ENCODE measurements at regions of chr14 and their contacts with region 1.

Region 1: GRCh38 chr14:71932220-71932981 is at the start of gene RGS6:
- DNase-seq: no peak
- ATAC-seq: peak; percentile 85
- H3K4me3 ChIP-seq: peak within 1 kb of the TSS; percentile 58
- H3K27ac ChIP-seq: peak within 1 kb of the TSS; percentile 48
- H3K4me1 ChIP-seq: no peaks in the 10 kb centered on the region
- H3K27me3 ChIP-seq: peaks cover 0 to 6% of the 10 kb centered on the region in 2 experiments; a peak in 1 of 4 replicates
- CTCF ChIP-seq: peak; percentile 40 to 60 (median 47); a peak in 5 of 6 replicates
- EP300 ChIP-seq: no peak
- POLR2A ChIP-seq: peak; percentile 45; the same call in 1 of the 2 replicates
- RAD21 ChIP-seq: peak; percentile 76
- polyA plus RNA-seq, gene RGS6: 3.9 to 4.7 TPM

Region 2: DNA sequence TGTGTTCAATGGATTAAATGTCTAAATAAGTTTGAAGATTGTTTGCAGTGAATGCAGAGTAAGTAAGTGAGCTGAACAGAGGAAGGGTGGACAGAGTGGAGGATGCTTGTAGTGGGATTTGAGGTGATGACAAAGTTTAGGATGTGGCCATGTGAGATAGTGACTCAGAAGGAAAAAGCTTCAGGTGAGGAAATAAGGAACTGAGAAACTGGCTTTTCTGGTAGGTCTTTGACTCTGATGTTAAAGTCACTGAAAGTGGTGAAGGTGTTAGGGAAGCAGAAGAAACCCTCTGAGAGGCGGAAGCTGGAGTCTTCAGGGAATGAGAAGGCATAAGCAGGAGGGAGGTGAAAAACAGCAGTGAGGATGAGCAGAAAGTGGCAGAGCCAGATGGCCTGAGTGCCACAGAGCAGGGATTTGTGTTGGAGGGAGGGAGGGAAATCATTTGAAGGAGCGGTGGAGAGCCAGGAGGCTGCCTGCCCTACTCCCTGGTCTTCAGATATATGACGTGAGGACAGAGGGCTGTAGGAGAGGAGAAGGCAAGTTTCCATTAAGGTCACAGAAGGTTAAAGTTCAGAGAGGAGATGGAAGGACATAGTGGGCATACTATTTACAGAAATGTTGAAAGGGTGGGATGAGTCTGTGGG is 24.6 kb after region 1 on chr14:
- CTCF ChIA-PET with region 1: interaction called, 15 read pairs
- POLR2A ChIA-PET with region 1: interaction called, 6 read pairs
- RAD21 ChIA-PET with region 1: interaction called, 32 read pairs
- SMC1A ChIA-PET with region 1: interaction called, 33 read pairs
- in situ Hi-C with region 1: no loop called
- intact Hi-C with region 1: no loop called
- DNase-seq: peak; percentile 78
- ATAC-seq: peak; percentile 83
- H3K4me3 ChIP-seq: no peak overlapping the region
- H3K27ac ChIP-seq: peak overlapping the region; percentile 70
- H3K4me1 ChIP-seq: peaks cover 18% of the 10 kb centered on the region
- H3K27me3 ChIP-seq: no peaks in the 10 kb centered on the region
- CTCF ChIP-seq: no peak
- EP300 ChIP-seq: peak; percentile 88 to 99
- POLR2A ChIP-seq: no peak
- RAD21 ChIP-seq: no peak

Region 3: GRCh38 chr14:71995741-71996140 is 63.3 kb after region 1 on chr14:
- CTCF ChIA-PET with region 1: interaction called, 7 read pairs
- POLR2A ChIA-PET with region 1: no interaction called
- RAD21 ChIA-PET with region 1: interaction called, 10 read pairs
- SMC1A ChIA-PET with region 1: interaction called, 7 read pairs
- in situ Hi-C with region 1: no loop called
- intact Hi-C with region 1: loop called (anchors 5 kb)
- DNase-seq: no peak
- ATAC-seq: no peak
- H3K4me3 ChIP-seq: no peak overlapping the region
- H3K27ac ChIP-seq: no peak overlapping the region
- H3K4me1 ChIP-seq: no peaks in the 10 kb centered on the region
- H3K27me3 ChIP-seq: no peaks in the 10 kb centered on the region
- CTCF ChIP-seq: no peak
- EP300 ChIP-seq: no peak
- POLR2A ChIP-seq: no peak
- RAD21 ChIP-seq: no peak

Region 4: GRCh38 chr14:72023722-72024407 is 91.5 kb after region 1 on chr14:
- CTCF ChIA-PET with region 1: interaction called, 56 read pairs
- POLR2A ChIA-PET with region 1: interaction called, 4 read pairs
- RAD21 ChIA-PET with region 1: interaction called, 38 read pairs
- SMC1A ChIA-PET with region 1: interaction called, 74 read pairs
- in situ Hi-C with region 1: no loop called
- intact Hi-C with region 1: loop called (anchors 5 kb)
- DNase-seq: peak; percentile 43
- ATAC-seq: peak; percentile 90
- H3K4me3 ChIP-seq: no peak overlapping the region
- H3K27ac ChIP-seq: no peak overlapping the region
- H3K4me1 ChIP-seq: peaks cover 15% of the 10 kb centered on the region
- H3K27me3 ChIP-seq: no peaks in the 10 kb centered on the region
- CTCF ChIP-seq: peak; percentile 61 to 76 (median 64)
- EP300 ChIP-seq: no peak
- POLR2A ChIP-seq: no peak
- RAD21 ChIP-seq: peak; percentile 80

Region 5: DNA sequence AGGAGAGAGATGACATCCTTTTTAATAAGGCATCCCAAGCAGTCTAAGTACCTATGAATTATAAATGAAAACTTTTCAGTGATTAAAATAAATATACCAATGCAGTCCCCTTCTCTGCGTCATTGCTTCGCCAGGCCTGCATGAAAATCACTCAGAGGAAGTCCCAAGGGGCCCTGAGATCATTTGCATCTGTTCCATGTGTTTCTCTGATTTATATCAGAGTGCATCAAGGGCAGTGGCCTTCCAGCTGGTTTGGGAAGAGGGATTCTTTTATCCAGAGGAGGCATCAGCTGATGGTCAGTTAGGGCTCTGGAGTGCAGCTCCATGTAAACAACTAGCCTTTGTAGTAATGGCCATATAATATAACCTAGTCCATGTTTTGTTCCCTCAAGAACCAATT is 209.9 kb after region 1 on chr14:
- CTCF ChIA-PET with region 1: interaction called, 11 read pairs
- POLR2A ChIA-PET with region 1: no interaction called
- RAD21 ChIA-PET with region 1: no interaction called
- SMC1A ChIA-PET with region 1: interaction called, 4 read pairs
- in situ Hi-C with region 1: no loop called
- intact Hi-C with region 1: no loop called
- DNase-seq: no peak
- ATAC-seq: no peak; the same call in 2 of the 3 replicates
- H3K4me3 ChIP-seq: no peak overlapping the region
- H3K27ac ChIP-seq: no peak overlapping the region
- H3K4me1 ChIP-seq: no peaks in the 10 kb centered on the region
- H3K27me3 ChIP-seq: no peaks in the 10 kb centered on the region
- CTCF ChIP-seq: no peak
- EP300 ChIP-seq: no peak
- POLR2A ChIP-seq: no peak
- RAD21 ChIP-seq: no peak

Region 6: DNA sequence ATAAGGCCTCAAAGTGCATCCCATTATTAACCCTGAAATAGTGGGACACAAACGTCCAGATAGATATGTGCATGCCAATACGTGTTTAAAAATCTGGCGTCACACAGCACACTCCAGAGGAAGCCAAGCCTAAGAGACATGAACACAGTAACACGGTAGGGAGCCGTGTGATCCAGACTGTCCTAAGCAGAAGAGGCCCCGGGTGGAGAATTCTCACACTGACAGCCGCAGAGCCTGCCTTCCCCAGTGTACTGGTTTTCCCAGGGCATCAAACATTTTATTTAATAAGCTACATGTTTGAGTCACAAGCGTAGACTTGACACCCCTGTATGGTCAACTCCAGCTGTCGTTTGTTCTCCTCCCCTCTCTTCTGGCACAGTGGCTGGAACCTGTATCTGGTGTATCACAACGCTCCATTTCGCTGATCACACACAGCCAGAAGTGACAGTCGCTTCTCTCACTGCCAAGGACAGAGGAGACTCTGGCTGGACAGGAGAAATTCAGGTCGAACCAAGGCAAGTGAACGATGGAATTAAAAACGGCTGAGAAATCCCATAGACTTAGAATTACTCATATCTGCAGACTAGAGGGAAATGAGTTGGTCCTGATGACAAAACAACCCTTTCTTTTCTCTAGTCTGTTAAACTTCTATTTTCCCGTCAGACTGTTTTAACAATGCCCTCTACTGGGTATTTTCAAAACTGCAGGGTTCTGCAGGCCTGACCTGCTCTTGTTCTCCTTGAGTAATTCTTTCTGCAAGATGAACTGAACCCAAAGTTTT is 359.7 kb after region 1 on chr14:
- CTCF ChIA-PET with region 1: interaction called, 11 read pairs
- POLR2A ChIA-PET with region 1: no interaction called
- RAD21 ChIA-PET with region 1: interaction called, 11 read pairs
- SMC1A ChIA-PET with region 1: no interaction called
- in situ Hi-C with region 1: loop called (anchors 10 kb)
- intact Hi-C with region 1: loop called (anchors 10 kb)
- DNase-seq: peak; percentile 31
- ATAC-seq: peak; percentile 88
- H3K4me3 ChIP-seq: no peak overlapping the region
- H3K27ac ChIP-seq: no peak overlapping the region
- H3K4me1 ChIP-seq: no peaks in the 10 kb centered on the region
- H3K27me3 ChIP-seq: no peaks in the 10 kb centered on the region
- CTCF ChIP-seq: peak; percentile 68 to 73 (median 71)
- EP300 ChIP-seq: no peak
- POLR2A ChIP-seq: no peak
- RAD21 ChIP-seq: peak; percentile 84